Naive thymus-derived CD4-positive, alpha-beta T cell (primary cell): ENCODE measurements at regions of chr14 and their contacts with region 1.

Region 1: DNA sequence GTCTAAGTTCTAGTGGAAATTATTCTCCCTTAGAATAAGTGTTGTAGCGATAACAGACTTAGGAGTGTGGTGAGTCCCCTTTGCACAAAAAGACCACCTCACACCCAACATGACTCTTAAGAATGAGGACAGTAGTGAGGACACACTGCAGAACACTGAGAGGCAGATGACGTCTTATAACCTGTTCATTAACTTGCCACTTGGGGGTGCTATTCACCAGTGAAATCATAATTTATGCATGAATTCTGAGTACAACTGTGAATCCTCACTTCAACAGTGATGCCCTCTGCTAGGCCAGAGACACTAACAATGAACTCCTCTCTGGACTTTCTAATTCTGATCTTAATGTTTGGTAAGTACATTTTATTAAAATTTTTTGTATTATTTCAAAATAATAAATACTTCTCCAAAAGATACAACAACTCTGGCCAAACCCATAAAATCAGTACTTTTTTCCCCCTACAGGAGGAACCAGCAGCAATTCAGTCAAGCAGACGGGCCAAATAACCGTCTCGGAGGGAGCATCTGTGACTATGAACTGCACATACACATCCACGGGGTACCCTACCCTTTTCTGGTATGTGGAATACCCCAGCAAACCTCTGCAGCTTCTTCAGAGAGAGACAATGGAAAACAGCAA is 274.7 kb downstream of the DAD1 start:
- DNase-seq: peak in 3 of 9 donors; percentile 4 to 32 (median 19)
- ATAC-seq: peak; percentile 76
- H3K4me3 ChIP-seq: no peak overlapping the region
- H3K4me3 Mint-ChIP-seq: peak overlapping the region in 7 of 10 donors; percentile 42 to 83 (median 60)
- H3K27ac ChIP-seq: no peak overlapping the region
- H3K27ac Mint-ChIP-seq: peak overlapping the region in 5 of 9 donors; percentile 59 to 80 (median 73)
- H3K4me1 ChIP-seq: no peaks in the 10 kb centered on the region
- H3K4me1 Mint-ChIP-seq: peaks cover 0 to 4% (median 0%) of the 10 kb centered on the region in 7 donors
- H3K27me3 ChIP-seq: no peaks in the 10 kb centered on the region
- H3K27me3 Mint-ChIP-seq: no peaks in the 10 kb centered on the region

Region 2: DNA sequence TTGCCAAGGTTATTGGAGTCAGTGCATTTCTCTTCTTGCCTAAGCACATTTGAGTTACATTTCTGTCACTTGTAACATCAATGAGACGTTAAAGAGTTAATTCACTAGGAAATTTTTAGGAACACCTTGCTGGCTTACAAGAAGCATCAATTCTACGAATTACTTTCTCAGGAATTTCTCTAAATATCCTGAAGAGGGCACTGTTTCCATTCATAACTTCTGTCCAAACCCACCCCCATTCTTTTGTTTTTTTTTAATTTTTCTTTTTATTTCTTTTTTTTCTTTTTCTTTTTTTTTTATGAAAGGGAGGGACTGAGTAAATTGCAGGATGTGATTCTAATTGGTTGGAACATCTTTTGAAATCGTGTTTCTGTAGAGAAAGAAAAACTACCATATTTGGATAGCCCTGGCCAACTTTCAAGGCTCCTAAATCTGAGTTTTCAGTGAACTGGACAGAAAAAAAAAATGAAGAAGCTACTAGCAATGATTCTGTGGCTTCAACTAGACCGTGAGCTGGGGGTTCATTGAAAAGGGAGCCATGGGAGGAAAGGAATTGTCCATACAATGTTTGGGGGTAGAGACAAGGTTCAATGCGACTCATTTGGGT is 10.6 kb before region 1 on chr14:
- CTCF ChIA-PET with region 1: no interaction called
- POLR2A ChIA-PET with region 1: no interaction called
- intact Hi-C with region 1: loop called in 1 of 2 experiments (anchors 1 kb)
- DNase-seq: peak in 3 of 9 donors; percentile 4 to 17 (median 9)
- ATAC-seq: no peak
- H3K4me3 ChIP-seq: no peak overlapping the region
- H3K4me3 Mint-ChIP-seq: peak overlapping the region; percentile 59 to 79 (median 74)
- H3K27ac ChIP-seq: peak overlapping the region; percentile 21
- H3K27ac Mint-ChIP-seq: peak overlapping the region in 5 of 9 donors; percentile 31 to 76 (median 63)
- H3K4me1 ChIP-seq: no peaks in the 10 kb centered on the region
- H3K4me1 Mint-ChIP-seq: no peaks in the 10 kb centered on the region
- H3K27me3 ChIP-seq: no peaks in the 10 kb centered on the region
- H3K27me3 Mint-ChIP-seq: no peaks in the 10 kb centered on the region

Region 3: DNA sequence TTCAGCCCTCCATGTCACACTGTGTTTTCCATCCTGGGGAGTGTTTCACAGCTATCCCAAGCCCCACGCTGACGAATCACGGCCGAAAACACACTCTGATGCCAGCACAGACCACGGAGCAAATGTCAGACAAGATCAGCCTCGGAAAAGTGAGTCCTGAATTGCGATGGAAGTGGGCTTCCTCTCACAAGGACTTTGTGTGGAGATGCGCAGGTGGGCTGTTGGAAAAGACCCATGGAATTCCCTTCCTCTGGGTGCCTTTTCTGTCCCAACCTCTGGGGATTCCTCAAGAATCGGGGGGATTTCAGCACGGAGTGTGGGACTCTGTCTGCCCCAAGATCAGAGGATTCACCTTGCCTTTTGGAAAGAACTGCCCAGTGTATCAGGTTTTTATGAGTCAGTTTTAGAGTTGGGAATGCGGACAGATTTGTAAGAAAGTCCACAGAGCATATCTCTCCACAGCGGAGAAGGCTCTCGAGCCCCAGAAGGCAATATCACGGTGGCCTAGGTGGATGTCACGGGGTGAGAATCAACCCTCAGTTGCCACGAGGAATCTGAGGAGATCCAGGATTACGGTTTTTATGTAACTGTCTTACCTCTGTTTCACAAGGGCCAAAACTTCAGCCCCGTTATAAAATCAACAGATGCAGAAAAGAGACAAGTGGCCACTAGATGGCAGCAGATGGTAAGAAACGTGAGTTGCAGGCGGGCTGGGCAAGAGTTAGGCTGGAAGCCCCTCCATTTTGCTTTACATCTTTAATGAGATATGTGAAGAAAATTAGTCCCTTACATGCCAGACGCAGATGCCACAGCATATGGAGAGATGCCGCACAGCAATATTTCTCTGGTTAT is 72.8 kb after region 1 on chr14:
- CTCF ChIA-PET with region 1: no interaction called
- POLR2A ChIA-PET with region 1: no interaction called
- intact Hi-C with region 1: loop called in 1 of 2 experiments (anchors 10 kb)
- DNase-seq: peak in 1 of 9 donors; percentile 33
- ATAC-seq: peak; percentile 33
- H3K4me3 ChIP-seq: no peak overlapping the region
- H3K4me3 Mint-ChIP-seq: no peak overlapping the region
- H3K27ac ChIP-seq: no peak overlapping the region
- H3K27ac Mint-ChIP-seq: no peak overlapping the region
- H3K4me1 ChIP-seq: no peaks in the 10 kb centered on the region
- H3K4me1 Mint-ChIP-seq: peaks cover 0 to 5% (median 0%) of the 10 kb centered on the region in 7 donors
- H3K27me3 ChIP-seq: no peaks in the 10 kb centered on the region
- H3K27me3 Mint-ChIP-seq: no peaks in the 10 kb centered on the region